ENCODE measurements at regions of chr11 and their contacts with region 1.

Region 1: GRCh38 chr11:46315033-46315738 is 32.1 kb upstream of the DGKZ start:
- DNase-seq: peak; percentile 86
- ATAC-seq: peak; percentile 97
- H3K4me3 ChIP-seq: no peak overlapping the region
- H3K27ac ChIP-seq: no peak overlapping the region
- H3K4me1 ChIP-seq: peaks cover 5 to 15% of the 10 kb centered on the region in 2 experiments; a peak in 3 of 4 replicates
- H3K27me3 ChIP-seq: no peaks in the 10 kb centered on the region
- CTCF ChIP-seq: peak; percentile 78 to 99 (median 98)
- POLR2A ChIP-seq: no peak
- RAD21 ChIP-seq: peak; percentile 81

Region 2: DNA sequence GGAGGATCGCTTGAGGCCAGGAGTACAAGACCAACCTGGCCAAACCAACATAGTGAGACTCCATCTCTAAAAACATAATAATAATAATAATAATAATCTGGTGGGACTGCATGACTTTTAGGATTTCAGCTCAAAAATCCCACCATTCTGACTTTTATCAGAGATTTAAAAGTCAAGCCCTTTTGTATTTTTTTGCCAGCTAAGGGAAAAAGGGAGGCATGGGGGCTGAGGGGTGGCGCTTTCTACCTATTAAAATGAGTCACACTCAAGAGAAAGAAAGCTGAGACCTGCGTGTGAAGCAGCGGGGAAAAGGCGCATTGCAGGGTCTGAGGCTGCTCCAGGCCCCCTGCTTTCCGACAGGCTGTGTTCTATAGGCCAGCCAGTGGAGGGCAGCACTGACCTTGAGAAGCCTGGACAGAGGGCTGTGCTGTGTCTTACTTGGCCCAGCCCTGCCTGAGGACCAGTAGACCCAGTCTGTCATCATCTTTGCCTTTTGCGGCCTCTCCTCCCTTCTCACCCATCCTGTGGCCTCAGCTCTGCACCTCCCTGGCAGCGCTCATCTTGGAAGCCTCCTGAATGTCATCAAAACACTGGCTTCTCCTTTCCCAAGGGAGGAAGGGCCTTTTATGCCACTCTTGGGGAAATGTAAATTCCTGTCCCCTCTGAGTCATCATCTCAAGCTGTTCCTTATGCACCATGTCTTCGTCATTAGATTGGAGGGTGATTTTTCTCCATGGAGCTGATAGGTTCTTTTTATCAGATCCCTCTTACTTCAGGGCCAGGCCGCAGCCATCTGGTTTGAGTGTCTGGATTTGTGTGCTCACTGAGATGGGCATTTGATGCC is 442.5 kb before region 1 on chr11:
- CTCF ChIA-PET with region 1: interaction called, 4 read pairs
- POLR2A ChIA-PET with region 1: no interaction called
- RAD21 ChIA-PET with region 1: no interaction called
- intact Hi-C with region 1: loop called (anchors 2 kb)
- DNase-seq: peak; percentile 41
- ATAC-seq: peak; percentile 99
- H3K4me3 ChIP-seq: no peak overlapping the region
- H3K27ac ChIP-seq: no peak overlapping the region
- H3K4me1 ChIP-seq: peaks cover 0 to 4% of the 10 kb centered on the region in 2 experiments; a peak in 1 of 4 replicates
- H3K27me3 ChIP-seq: no peaks in the 10 kb centered on the region
- CTCF ChIP-seq: peak; percentile 53 to 87 (median 77); a peak in 5 of 6 replicates
- POLR2A ChIP-seq: no peak
- RAD21 ChIP-seq: peak; percentile 84

Region 3: DNA sequence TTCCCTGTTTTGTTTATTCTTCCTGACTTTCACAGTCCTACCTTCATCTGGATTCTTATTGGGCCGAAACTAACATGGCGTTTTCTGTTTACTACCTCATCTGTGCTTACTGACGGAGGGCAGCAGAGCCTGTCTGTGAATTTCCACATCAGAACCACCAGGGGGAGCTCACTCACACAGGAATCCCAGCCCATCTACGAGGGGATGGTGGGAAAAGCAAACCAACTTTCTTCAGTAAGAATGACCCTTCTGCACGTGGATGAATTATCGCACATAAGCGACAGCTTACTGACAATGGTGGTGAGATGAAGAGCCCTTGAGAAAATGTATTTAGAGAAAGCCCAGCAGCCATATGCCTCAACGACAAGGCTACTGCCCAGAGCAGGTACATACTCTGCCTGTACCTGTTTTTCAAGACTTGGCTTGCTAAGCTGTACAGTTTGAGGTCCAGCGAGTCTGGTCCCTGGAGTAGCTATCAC is 350.2 kb before region 1 on chr11:
- CTCF ChIA-PET with region 1: interaction called, 7 read pairs
- POLR2A ChIA-PET with region 1: no interaction called
- RAD21 ChIA-PET with region 1: no interaction called
- intact Hi-C with region 1: loop called (anchors 10 kb)
- DNase-seq: peak; percentile 49
- ATAC-seq: peak; percentile 96
- H3K4me3 ChIP-seq: no peak overlapping the region
- H3K27ac ChIP-seq: no peak overlapping the region
- H3K4me1 ChIP-seq: no peaks in the 10 kb centered on the region
- H3K27me3 ChIP-seq: no peaks in the 10 kb centered on the region
- CTCF ChIP-seq: peak; percentile 74 to 94 (median 91)
- POLR2A ChIP-seq: no peak
- RAD21 ChIP-seq: peak; percentile 77

Region 4: GRCh38 chr11:46127150-46127638 is 188.0 kb before region 1 on chr11:
- CTCF ChIA-PET with region 1: no interaction called
- POLR2A ChIA-PET with region 1: no interaction called
- RAD21 ChIA-PET with region 1: no interaction called
- intact Hi-C with region 1: loop called (anchors 2 kb)
- DNase-seq: peak; percentile 84
- ATAC-seq: peak; percentile 99
- H3K4me3 ChIP-seq: no peak overlapping the region
- H3K27ac ChIP-seq: peak overlapping the region; percentile 9; the same call in 1 of the 2 replicates
- H3K4me1 ChIP-seq: peaks cover 11 to 26% of the 10 kb centered on the region in 2 experiments; a peak in 3 of 4 replicates
- H3K27me3 ChIP-seq: no peaks in the 10 kb centered on the region
- CTCF ChIP-seq: peak; percentile 68 to 79 (median 79); a peak in 5 of 6 replicates
- POLR2A ChIP-seq: peak; percentile 41
- RAD21 ChIP-seq: peak; percentile 71

Region 5: GRCh38 chr11:46216019-46216764 is 99.0 kb before region 1 on chr11:
- CTCF ChIA-PET with region 1: no interaction called
- POLR2A ChIA-PET with region 1: no interaction called
- RAD21 ChIA-PET with region 1: no interaction called
- intact Hi-C with region 1: no loop called
- DNase-seq: no peak
- ATAC-seq: no peak
- H3K4me3 ChIP-seq: no peak overlapping the region
- H3K27ac ChIP-seq: no peak overlapping the region
- H3K4me1 ChIP-seq: no peaks in the 10 kb centered on the region
- H3K27me3 ChIP-seq: no peaks in the 10 kb centered on the region
- CTCF ChIP-seq: no peak
- POLR2A ChIP-seq: no peak
- RAD21 ChIP-seq: no peak

Region 6: DNA sequence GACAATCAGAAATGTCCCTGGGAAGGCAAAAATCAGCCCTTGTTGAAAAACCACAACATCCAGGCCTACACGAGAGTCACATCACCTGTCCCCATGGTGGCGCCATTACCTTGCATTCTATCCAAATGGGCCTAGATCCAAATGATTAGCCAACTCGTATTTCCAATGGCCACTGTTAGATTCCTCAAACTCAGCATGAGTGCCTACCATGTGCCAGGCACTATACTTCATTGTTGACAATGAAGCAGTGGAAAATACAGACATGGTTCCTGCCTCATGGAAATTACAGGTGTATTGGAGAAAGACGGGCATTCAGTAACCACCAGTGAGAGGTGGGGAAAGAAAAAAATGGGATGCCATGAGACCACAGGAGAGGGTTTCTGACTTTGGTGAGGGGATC is 67.5 kb before region 1 on chr11:
- CTCF ChIA-PET with region 1: interaction called, 22 read pairs
- POLR2A ChIA-PET with region 1: interaction called, 13 read pairs
- RAD21 ChIA-PET with region 1: interaction called, 3 to 10 read pairs
- intact Hi-C with region 1: no loop called
- DNase-seq: peak; percentile 76
- ATAC-seq: peak; percentile 29
- H3K4me3 ChIP-seq: no peak overlapping the region
- H3K27ac ChIP-seq: peak overlapping the region; percentile 47; the same call in 1 of the 2 replicates
- H3K4me1 ChIP-seq: peaks cover 11 to 53% of the 10 kb centered on the region in 2 experiments
- H3K27me3 ChIP-seq: no peaks in the 10 kb centered on the region
- CTCF ChIP-seq: peak; percentile 62 to 90 (median 76)
- POLR2A ChIP-seq: no peak
- RAD21 ChIP-seq: peak; percentile 95

Region 7: DNA sequence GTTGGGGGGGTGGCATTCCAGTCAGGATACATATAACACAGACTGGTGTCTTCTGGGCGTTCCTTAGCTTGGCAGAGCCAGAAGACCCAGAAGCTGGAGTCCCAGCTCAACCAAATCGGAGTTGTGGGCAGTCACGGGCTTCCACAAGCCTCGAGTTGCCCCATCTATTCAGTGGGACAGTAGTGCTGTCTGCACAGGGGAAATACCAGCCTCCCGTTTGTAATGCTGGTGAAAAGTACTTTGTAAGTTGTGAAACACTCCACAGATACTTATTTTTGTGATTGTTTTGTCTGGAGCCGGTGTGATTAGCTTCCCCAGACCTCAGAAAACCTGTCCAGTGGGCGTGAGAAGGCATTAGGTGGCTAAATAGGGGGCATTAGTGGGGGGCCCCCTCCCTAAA is 45.7 kb after region 1 on chr11:
- CTCF ChIA-PET with region 1: no interaction called
- POLR2A ChIA-PET with region 1: no interaction called
- RAD21 ChIA-PET with region 1: no interaction called
- intact Hi-C with region 1: no loop called
- DNase-seq: no peak
- ATAC-seq: no peak
- H3K4me3 ChIP-seq: no peak overlapping the region
- H3K27ac ChIP-seq: no peak overlapping the region; the same call in 1 of the 2 replicates
- H3K4me1 ChIP-seq: peaks cover 20 to 40% of the 10 kb centered on the region in 2 experiments
- H3K27me3 ChIP-seq: no peaks in the 10 kb centered on the region
- CTCF ChIP-seq: no peak
- POLR2A ChIP-seq: no peak
- RAD21 ChIP-seq: no peak